Heart right ventricle (tissue), 16 donors: ENCODE measurements at regions of chr14 and their contacts with region 1.

Region 1: GRCh38 chr14:94485944-94486841 is 10.2 kb upstream of the SERPINA9 start:
- DNase-seq: peak; percentile 11 to 48
- ATAC-seq: peak; percentile 63 to 86 (median 72)
- H3K4me3 ChIP-seq: no peak overlapping the region
- H3K27ac ChIP-seq: no peak overlapping the region
- H3K4me1 ChIP-seq: peaks cover 0 to 8% (median 7%) of the 10 kb centered on the region in 9 donors
- H3K27me3 ChIP-seq: peaks cover 0 to 73% (median 45%) of the 10 kb centered on the region in 7 donors
- CTCF ChIP-seq: peak; percentile 93 to 100 (median 99)

Region 2: GRCh38 chr14:94355191-94355797 is 130.9 kb before region 1 on chr14:
- intact Hi-C with region 1: loop called in 4 of 10 experiments (anchors 5 to 10 kb)
- DNase-seq: peak; percentile 12 to 31
- ATAC-seq: peak in 2 of 8 donors; percentile 31 to 41
- H3K4me3 ChIP-seq: no peak overlapping the region
- H3K27ac ChIP-seq: no peak overlapping the region
- H3K4me1 ChIP-seq: no peaks in the 10 kb centered on the region
- H3K27me3 ChIP-seq: peaks cover 0 to 49% (median 23%) of the 10 kb centered on the region in 7 donors
- CTCF ChIP-seq: peak in 5 of 9 donors; percentile 19 to 52 (median 34)

Region 3: GRCh38 chr14:94423453-94424056 is 62.6 kb before region 1 on chr14:
- intact Hi-C with region 1: loop called in 3 of 10 experiments (anchors 2 to 10 kb)
- DNase-seq: peak; percentile 55 to 67
- ATAC-seq: peak in 2 of 8 donors; percentile 33 to 55
- H3K4me3 ChIP-seq: no peak overlapping the region
- H3K27ac ChIP-seq: no peak overlapping the region
- H3K4me1 ChIP-seq: peaks cover 0 to 7% (median 0%) of the 10 kb centered on the region in 9 donors
- H3K27me3 ChIP-seq: peaks cover 0 to 62% (median 36%) of the 10 kb centered on the region in 7 donors
- CTCF ChIP-seq: peak; percentile 14 to 74 (median 55)